ENCODE measurements at regions of chr2 and their contacts with region 1.

Region 1: DNA sequence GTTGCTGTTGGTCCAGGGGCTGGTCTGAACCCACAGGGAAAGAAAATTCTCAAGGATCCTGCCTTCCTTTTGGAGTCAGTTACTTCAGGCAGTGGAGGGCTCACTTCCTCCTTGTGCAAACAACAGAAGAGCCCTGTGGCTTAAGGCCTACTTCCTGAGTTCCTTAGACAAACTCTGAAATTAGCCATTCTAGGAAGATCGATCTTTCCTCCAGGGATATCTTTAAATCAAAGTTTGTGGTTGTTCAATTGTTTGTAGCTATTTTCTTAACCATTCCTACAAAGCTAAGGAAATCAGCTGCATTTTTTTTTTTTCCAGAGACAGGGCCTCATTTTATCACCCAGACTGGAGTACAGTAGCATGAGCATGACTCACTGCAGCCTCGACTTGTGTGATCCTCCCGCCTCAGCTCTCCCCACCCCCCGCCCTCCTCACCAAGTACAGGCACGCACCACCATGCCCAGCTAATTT is 156.0 kb downstream of the TANC1 start:
- DNase-seq: peak; percentile 86
- H3K4me3 Mint-ChIP-seq: no peak overlapping the region
- H3K27ac Mint-ChIP-seq: peak overlapping the region; percentile 2
- H3K4me1 Mint-ChIP-seq: peaks cover 38% of the 10 kb centered on the region
- H3K27me3 Mint-ChIP-seq: no peaks in the 10 kb centered on the region
- CTCF ChIP-seq: no peak

Region 2: DNA sequence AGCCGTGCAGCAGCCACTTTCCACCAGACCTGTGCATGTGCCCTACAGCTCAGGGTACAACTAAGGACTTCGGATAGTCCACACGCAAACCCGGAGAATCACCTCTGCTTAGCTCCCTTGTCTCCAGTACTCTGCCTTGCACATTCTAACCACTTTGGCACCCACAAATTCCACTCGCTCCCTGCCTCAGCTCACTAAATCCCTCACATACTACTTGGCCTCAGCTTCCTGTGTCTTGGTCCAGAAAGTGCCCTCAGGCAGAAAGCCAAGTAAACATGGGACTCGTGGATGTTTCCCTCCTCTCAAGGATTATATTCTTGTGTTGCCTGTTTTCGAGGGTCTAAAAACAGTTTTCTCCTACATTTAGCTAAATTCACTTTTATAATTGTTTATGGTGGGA is 487.1 kb before region 1 on chr2:
- CTCF ChIA-PET with region 1: no interaction called
- POLR2A ChIA-PET with region 1: no interaction called
- intact Hi-C with region 1: no loop called
- DNase-seq: no peak
- H3K4me3 Mint-ChIP-seq: no peak overlapping the region
- H3K27ac Mint-ChIP-seq: no peak overlapping the region
- H3K4me1 Mint-ChIP-seq: no peaks in the 10 kb centered on the region
- H3K27me3 Mint-ChIP-seq: no peaks in the 10 kb centered on the region
- CTCF ChIP-seq: no peak

Region 3: GRCh38 chr2:158815658-158816410 is 308.6 kb before region 1 on chr2:
- CTCF ChIA-PET with region 1: no interaction called
- POLR2A ChIA-PET with region 1: no interaction called
- intact Hi-C with region 1: no loop called
- DNase-seq: no peak
- H3K4me3 Mint-ChIP-seq: no peak overlapping the region
- H3K27ac Mint-ChIP-seq: no peak overlapping the region
- H3K4me1 Mint-ChIP-seq: peaks cover 7% of the 10 kb centered on the region
- H3K27me3 Mint-ChIP-seq: peaks cover 9% of the 10 kb centered on the region
- CTCF ChIP-seq: no peak

Region 4: DNA sequence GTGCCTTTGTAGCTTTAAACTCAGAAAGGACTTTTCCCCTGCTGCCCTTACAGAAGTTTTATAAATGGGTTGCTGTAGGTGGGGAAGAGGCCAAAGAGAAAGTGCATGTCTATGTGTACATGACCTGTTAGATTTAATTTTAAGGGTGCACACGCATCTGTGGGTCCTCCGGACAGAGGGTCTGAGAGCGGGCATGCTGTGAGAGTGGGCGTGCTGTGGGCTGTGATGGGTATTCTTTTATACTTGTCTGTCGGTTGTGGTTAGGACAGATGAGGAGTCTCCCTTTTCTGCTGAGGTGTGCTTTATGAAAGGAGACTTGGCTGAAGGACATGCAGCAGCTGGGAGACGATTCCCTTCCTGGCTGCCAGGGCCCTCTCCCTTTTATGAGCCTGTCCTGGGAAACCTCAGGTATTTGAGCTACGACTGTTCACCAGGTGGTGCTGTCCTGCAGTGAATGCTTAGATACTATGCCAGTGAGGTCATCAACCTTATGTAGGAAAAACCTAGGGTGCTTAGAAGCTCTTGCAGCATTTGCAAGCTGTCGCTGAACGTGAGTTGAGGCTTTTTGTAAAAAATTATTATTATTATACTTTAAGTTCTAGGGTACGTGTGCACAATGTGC is 88.6 kb before region 1 on chr2:
- CTCF ChIA-PET with region 1: interaction called, 196 read pairs
- POLR2A ChIA-PET with region 1: interaction called, 4 read pairs
- intact Hi-C with region 1: no loop called
- DNase-seq: peak; percentile 73
- H3K4me3 Mint-ChIP-seq: no peak overlapping the region
- H3K27ac Mint-ChIP-seq: no peak overlapping the region
- H3K4me1 Mint-ChIP-seq: peaks cover 33% of the 10 kb centered on the region
- H3K27me3 Mint-ChIP-seq: no peaks in the 10 kb centered on the region
- CTCF ChIP-seq: peak; percentile 53

Region 5: GRCh38 chr2:159140070-159140769 is 15.7 kb after region 1 on chr2:
- CTCF ChIA-PET with region 1: interaction called, 18 read pairs
- POLR2A ChIA-PET with region 1: interaction called, 6 read pairs
- intact Hi-C with region 1: no loop called
- DNase-seq: peak; percentile 73
- H3K4me3 Mint-ChIP-seq: no peak overlapping the region
- H3K27ac Mint-ChIP-seq: peak overlapping the region; percentile 61
- H3K4me1 Mint-ChIP-seq: peaks cover 56% of the 10 kb centered on the region
- H3K27me3 Mint-ChIP-seq: no peaks in the 10 kb centered on the region
- CTCF ChIP-seq: no peak

Region 6: GRCh38 chr2:159164457-159164911 is 40.0 kb after region 1 on chr2:
- CTCF ChIA-PET with region 1: no interaction called
- POLR2A ChIA-PET with region 1: no interaction called
- intact Hi-C with region 1: no loop called
- DNase-seq: no peak
- H3K4me3 Mint-ChIP-seq: no peak overlapping the region
- H3K27ac Mint-ChIP-seq: no peak overlapping the region
- H3K4me1 Mint-ChIP-seq: peaks cover 8% of the 10 kb centered on the region
- H3K27me3 Mint-ChIP-seq: no peaks in the 10 kb centered on the region
- CTCF ChIP-seq: no peak

Measured in MCF 10A (cell line).